ENCODE measurements at regions of chr6 and their contacts with region 1.

Region 1: DNA sequence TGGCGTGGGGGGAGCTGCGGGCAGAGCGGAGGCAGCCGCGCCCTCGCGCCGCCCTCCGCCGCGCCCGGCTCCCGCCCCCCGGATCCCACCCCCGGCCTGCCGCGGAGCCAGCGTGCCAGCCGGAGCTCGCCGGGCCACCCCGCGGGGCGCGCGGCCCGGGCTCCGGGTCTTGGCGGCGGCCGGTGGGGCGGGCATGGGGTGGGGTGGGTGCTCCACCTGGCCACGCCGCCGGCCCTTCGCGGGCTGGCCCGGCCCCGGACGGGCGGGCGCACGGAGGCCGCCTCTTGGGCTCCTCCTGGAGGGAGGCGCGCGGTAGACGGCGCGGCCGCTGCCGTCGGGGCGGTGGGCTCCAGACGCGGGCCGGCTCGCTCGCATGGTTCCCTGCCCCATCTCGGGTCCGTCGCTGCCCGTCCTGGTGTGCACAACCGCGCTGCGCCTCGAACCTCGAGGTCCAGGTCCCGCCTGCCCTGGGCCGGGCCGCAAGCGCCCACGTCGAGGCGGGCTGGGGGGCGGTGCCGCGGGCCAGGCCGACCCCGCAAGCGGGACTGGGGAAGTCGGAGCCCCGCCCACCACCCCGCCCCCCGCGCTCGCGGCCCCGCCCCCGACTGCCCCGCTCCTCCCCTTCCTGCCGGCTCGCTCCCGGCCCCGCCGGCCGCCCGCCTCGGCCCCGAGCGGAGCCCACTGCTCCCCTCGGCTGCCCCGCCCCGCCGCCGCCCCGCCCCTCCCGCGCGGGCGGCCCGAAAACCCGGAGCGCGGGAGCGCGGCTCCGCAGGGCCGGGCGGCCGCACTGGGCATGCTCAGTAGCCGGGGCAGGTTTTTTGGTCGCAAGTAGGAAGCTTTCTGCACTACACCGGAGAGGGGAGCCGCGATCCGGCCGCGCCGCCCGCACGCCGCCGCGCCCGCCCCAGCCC is at the start of gene CDYL:
- DNase-seq: peak; percentile 85
- H3K4me3 Mint-ChIP-seq: peak within 1 kb of the TSS; percentile 85
- H3K27ac Mint-ChIP-seq: peak within 1 kb of the TSS; percentile 81
- H3K4me1 Mint-ChIP-seq: peaks cover 56% of the 10 kb centered on the region
- H3K27me3 Mint-ChIP-seq: peaks cover 12% of the 10 kb centered on the region
- total RNA-seq, gene CDYL: 23.8 to 24.3 TPM

Region 2: GRCh38 chr6:4055420-4056041 is 720.3 kb before region 1 on chr6:
- CTCF ChIA-PET with region 1: no interaction called
- intact Hi-C with region 1: loop called (anchors 5 kb)
- DNase-seq: peak; percentile 23
- H3K4me3 Mint-ChIP-seq: no peak overlapping the region
- H3K27ac Mint-ChIP-seq: peak overlapping the region; percentile 50
- H3K4me1 Mint-ChIP-seq: peaks cover 21% of the 10 kb centered on the region
- H3K27me3 Mint-ChIP-seq: no peaks in the 10 kb centered on the region

Region 3: GRCh38 chr6:4788953-4789584 is 13.2 kb after region 1 on chr6:
- CTCF ChIA-PET with region 1: interaction called, 10 read pairs
- intact Hi-C with region 1: loop called (anchors 1 kb)
- DNase-seq: no peak
- H3K4me3 Mint-ChIP-seq: no peak overlapping the region
- H3K27ac Mint-ChIP-seq: no peak overlapping the region
- H3K4me1 Mint-ChIP-seq: peaks cover 55% of the 10 kb centered on the region
- H3K27me3 Mint-ChIP-seq: no peaks in the 10 kb centered on the region

Region 4: GRCh38 chr6:4936681-4937041 is 160.8 kb after region 1 on chr6:
- CTCF ChIA-PET with region 1: no interaction called
- intact Hi-C with region 1: loop called (anchors 1 kb)
- DNase-seq: peak; percentile 23
- H3K4me3 Mint-ChIP-seq: no peak overlapping the region
- H3K27ac Mint-ChIP-seq: no peak overlapping the region
- H3K4me1 Mint-ChIP-seq: peaks cover 32% of the 10 kb centered on the region
- H3K27me3 Mint-ChIP-seq: no peaks in the 10 kb centered on the region

Region 5: GRCh38 chr6:5279891-5280338 is 504.1 kb after region 1 on chr6:
- CTCF ChIA-PET with region 1: no interaction called
- intact Hi-C with region 1: loop called (anchors 2 kb)
- DNase-seq: peak; percentile 69
- H3K4me3 Mint-ChIP-seq: no peak overlapping the region
- H3K27ac Mint-ChIP-seq: peak overlapping the region; percentile 83
- H3K4me1 Mint-ChIP-seq: peaks cover 37% of the 10 kb centered on the region
- H3K27me3 Mint-ChIP-seq: no peaks in the 10 kb centered on the region